ENCODE measurements at regions of chr2 and their contacts with region 1.

Region 1: GRCh38 chr2:61016808-61017555 is 538 bp upstream of the PEX13 start:
- DNase-seq: peak; percentile 69
- H3K4me3 Mint-ChIP-seq: peak overlapping the region; percentile 98
- H3K27ac Mint-ChIP-seq: peak overlapping the region; percentile 98
- H3K4me1 Mint-ChIP-seq: peaks cover 39% of the 10 kb centered on the region
- H3K27me3 Mint-ChIP-seq: no peaks in the 10 kb centered on the region

Region 2: GRCh38 chr2:60806988-60807681 is 209.8 kb before region 1 on chr2:
- intact Hi-C with region 1: loop called (anchors 5 kb)
- DNase-seq: no peak
- H3K4me3 Mint-ChIP-seq: peak overlapping the region; percentile 10
- H3K27ac Mint-ChIP-seq: peak overlapping the region; percentile 89
- H3K4me1 Mint-ChIP-seq: peaks cover 48% of the 10 kb centered on the region
- H3K27me3 Mint-ChIP-seq: no peaks in the 10 kb centered on the region

Region 3: GRCh38 chr2:60873381-60873780 is 143.6 kb before region 1 on chr2:
- intact Hi-C with region 1: loop called (anchors 2 kb)
- DNase-seq: no peak
- H3K4me3 Mint-ChIP-seq: no peak overlapping the region
- H3K27ac Mint-ChIP-seq: peak overlapping the region; percentile 69
- H3K4me1 Mint-ChIP-seq: peaks cover 26% of the 10 kb centered on the region
- H3K27me3 Mint-ChIP-seq: no peaks in the 10 kb centered on the region

Region 4: GRCh38 chr2:60881047-60881932 is 135.7 kb before region 1 on chr2 and contains the start of gene REL:
- intact Hi-C with region 1: loop called (anchors 2 kb)
- DNase-seq: peak; percentile 87
- H3K4me3 Mint-ChIP-seq: peak within 1 kb of the TSS; percentile 99
- H3K27ac Mint-ChIP-seq: peak within 1 kb of the TSS; percentile 97
- H3K4me1 Mint-ChIP-seq: peaks cover 25% of the 10 kb centered on the region
- H3K27me3 Mint-ChIP-seq: no peaks in the 10 kb centered on the region
- total RNA-seq, gene REL: 118 and 123 TPM in 2 replicates

Region 5: DNA sequence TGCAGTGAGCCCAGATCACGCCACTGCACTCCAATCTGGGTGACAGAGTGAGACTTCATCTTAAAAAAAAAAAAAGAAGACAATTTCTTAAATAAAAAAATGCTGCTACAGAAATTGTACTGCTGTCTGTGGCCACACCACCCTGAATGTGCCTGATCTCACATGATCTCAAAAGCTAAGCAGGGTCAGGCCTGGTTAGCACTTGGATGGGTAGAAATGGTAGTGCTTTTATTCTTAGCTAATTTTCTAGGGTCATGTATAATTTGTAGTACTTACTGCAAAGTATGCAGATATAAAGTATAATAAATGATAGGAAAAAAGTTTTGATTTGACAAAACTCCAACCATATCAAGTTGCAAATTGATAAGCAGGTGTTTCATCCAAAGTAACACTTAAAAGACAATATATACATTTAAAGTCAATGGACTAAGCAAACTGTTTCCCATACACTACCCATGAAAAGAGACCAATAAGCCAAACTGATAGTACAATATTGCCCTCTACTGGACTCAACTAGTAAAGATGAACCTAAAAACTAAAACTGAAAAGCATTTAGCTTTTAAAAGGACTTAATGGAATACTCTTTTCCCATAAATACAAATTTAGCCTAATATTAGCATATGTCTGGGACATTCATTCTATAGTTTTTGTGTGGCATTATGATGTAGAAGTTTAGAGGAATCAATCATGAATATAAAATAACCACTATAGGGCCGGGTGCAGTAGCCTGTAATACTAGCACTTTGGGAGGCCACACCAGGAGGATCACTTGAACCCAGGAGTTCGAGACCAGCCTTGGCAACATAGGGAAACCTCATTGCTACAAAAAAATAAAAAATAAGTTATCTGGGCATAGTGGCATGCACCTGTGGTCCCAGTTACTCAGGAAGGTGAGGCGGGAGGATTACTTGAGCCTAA is 18.1 kb before region 1 on chr2:
- intact Hi-C with region 1: no loop called
- DNase-seq: no peak
- H3K4me3 Mint-ChIP-seq: no peak overlapping the region
- H3K27ac Mint-ChIP-seq: no peak overlapping the region
- H3K4me1 Mint-ChIP-seq: peaks cover 3% of the 10 kb centered on the region
- H3K27me3 Mint-ChIP-seq: no peaks in the 10 kb centered on the region

Region 6: GRCh38 chr2:61065715-61066709 is 49.0 kb after region 1 on chr2 and contains the start of gene SANBR:
- intact Hi-C with region 1: loop called (anchors 1 kb)
- DNase-seq: peak; percentile 84
- H3K4me3 Mint-ChIP-seq: peak within 1 kb of the TSS; percentile 94
- H3K27ac Mint-ChIP-seq: peak within 1 kb of the TSS; percentile 85
- H3K4me1 Mint-ChIP-seq: peaks cover 12% of the 10 kb centered on the region
- H3K27me3 Mint-ChIP-seq: no peaks in the 10 kb centered on the region
- total RNA-seq, gene SANBR: 8.2 and 9.4 TPM in 2 replicates

Region 7: DNA sequence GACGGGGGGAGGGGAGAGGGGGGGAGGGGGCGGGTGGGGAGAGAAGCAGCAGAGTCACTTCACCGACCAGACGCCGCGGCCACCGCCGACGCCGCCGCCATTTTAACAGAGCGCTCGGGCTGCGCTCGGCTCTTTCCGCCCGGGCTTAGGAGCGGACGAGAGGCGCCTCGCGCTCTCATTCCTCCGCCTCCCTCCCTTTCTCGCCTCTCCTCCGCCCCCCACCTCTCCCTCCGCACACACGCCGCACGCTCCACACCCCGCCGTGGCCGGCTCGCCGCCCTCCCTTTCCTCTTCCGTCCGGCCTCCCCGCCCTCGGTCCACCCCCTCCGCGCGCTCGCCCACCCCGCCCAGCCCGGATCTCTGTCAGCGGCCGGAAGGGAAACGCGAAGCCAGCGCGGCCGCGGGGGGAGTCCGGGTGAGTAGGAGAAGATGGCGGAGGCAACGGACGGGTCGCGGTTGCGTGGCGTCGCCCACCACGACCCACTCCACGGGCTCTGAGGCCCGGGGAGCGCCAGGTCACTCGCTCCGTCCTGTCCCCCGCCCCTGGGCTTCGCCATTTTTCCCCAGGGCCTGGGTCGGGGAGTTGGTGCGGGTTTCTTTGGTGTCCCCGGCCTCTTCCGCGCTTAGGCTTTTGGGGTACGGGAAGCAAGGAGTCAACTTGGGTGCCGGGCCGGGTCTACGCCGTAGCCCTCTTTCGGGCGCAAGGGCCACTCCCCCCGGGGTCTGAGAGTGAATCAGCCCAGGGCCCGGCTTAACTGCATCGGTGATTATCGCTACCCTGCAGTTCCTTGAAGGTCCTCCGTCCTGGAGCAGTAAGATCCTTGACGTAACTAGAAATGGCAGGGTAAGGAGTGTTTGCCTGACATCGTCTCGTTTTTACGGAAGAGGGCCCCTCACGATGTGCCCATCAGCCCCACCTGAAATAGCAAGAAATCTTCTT is 454.3 kb after region 1 on chr2 and contains the start of gene USP34:
- intact Hi-C with region 1: loop called (anchors 2 kb)
- DNase-seq: peak; percentile 91
- H3K4me3 Mint-ChIP-seq: peak within 1 kb of the TSS; percentile 92
- H3K27ac Mint-ChIP-seq: peak within 1 kb of the TSS; percentile 93
- H3K4me1 Mint-ChIP-seq: peaks cover 24% of the 10 kb centered on the region
- H3K27me3 Mint-ChIP-seq: no peaks in the 10 kb centered on the region
- total RNA-seq, gene USP34: 87.4 and 89.3 TPM in 2 replicates

Measured in activated T-helper 2 cell treated with anti-CD3 and anti-CD28 coated beads, Interferon-gamma antibody, Interleukin-2, Interleukin-4, amounts not matched to agents 10 μg/mL and 5 μg/mL and 100 μg/mL, durations not matched to agents 14 hours and 24 hours and 36 hours (primary cell).